Esophagus muscularis mucosa (tissue), 4 donors: ENCODE measurements at regions of chr10 and their contacts with region 1.

Region 1: DNA sequence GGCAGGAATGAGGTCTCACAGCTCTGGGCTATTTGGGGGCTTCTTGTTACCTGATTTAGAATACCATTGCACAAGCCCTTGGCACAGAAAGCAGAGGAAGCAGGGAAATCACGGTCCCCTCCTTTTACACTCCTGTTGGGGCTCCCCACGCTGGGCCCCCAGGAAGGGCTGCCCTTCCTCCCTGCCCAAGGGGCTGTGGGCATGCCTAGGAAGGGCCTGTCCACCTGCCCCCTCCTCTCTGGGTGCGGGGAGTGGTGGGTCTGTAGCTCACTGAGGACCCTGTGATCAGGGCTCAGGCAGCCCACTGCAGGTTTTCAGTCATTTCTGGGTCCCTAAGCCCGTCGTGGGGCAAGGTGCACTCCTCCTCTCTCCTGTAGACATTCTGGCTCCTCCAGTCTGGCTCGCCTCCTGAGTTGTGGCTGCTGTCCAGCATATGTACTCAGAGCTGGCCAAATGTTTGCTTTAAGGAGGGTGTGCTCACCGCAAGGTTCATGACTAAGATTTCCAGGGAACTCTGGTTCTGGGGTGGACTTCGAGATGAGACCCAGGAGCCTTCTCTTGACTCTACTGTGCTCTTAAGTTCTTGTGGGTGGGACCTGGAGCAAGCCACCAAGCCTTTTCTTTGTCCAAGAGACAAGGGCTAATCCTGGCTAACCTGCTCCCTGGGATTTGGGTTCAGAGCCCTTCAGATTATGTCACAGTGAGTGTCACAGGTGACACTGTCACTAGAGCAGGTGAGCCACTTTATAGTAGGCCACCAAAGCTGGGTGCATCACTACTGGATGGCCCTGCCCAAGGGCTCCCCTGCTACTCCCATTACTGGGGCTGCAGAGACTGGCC is 56.0 kb downstream of the TACR2 start:
- DNase-seq: no peak
- H3K4me3 ChIP-seq: no peak overlapping the region
- H3K27ac ChIP-seq: peak overlapping the region; percentile 78 to 88 (median 82)
- H3K4me1 ChIP-seq: peaks cover 61 to 82% (median 63%) of the 10 kb centered on the region in 4 donors
- H3K27me3 ChIP-seq: no peaks in the 10 kb centered on the region
- CTCF ChIP-seq: no peak
- EP300 ChIP-seq: no peak
- POLR2A ChIP-seq: no peak

Region 2: DNA sequence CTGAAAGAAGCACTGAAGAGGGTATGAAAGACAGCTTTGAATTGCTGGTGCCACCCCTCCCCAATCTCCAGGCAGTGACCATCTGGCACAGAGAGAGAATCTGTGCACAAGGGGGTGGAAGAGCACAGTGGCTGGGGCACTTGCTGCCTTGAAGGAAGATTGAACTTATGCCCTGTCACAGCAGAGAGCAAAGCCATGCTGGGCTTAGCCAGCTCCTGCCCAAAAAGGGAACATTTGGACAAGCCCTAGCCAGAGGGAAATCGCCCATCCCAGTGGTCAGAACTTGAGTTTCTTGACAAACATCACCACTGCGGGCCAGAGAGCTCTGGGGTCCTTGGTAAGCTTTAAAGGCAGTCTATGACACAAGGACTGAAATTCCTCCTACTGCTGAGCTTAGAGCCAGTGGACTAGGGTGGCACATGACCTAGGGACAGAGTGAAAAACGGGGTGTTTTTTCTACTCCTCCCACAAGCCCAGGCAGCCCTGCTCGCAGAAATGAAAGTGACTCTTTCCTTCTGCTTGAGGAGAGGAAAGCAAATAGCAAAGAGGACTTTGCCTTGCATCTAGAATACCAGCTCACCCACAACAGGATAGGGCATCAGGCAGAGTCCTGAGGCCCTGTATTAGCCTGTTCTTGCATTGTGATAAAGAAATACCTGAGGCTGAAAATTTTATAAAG is 1921.9 kb before region 1 on chr10:
- intact Hi-C with region 1: no loop called
- DNase-seq: no peak
- H3K4me3 ChIP-seq: no peak overlapping the region
- H3K27ac ChIP-seq: no peak overlapping the region
- H3K4me1 ChIP-seq: peaks cover 0 to 6% (median 0%) of the 10 kb centered on the region in 4 donors
- H3K27me3 ChIP-seq: no peaks in the 10 kb centered on the region
- CTCF ChIP-seq: no peak
- EP300 ChIP-seq: no peak
- POLR2A ChIP-seq: no peak

Region 3: GRCh38 chr10:69327463-69328379 is 33.0 kb before region 1 on chr10:
- intact Hi-C with region 1: loop called (anchors 5 kb)
- DNase-seq: peak; percentile 93
- H3K4me3 ChIP-seq: peak overlapping the region; percentile 29 to 45 (median 40)
- H3K27ac ChIP-seq: peak overlapping the region; percentile 81 to 88 (median 86)
- H3K4me1 ChIP-seq: peaks cover 84 to 99% (median 93%) of the 10 kb centered on the region in 4 donors
- H3K27me3 ChIP-seq: no peaks in the 10 kb centered on the region
- CTCF ChIP-seq: no peak
- EP300 ChIP-seq: no peak
- POLR2A ChIP-seq: no peak

Region 4: GRCh38 chr10:69413221-69413865 is 52.6 kb after region 1 on chr10:
- intact Hi-C with region 1: no loop called
- DNase-seq: peak; percentile 95
- H3K4me3 ChIP-seq: peak overlapping the region; percentile 43 to 58 (median 48)
- H3K27ac ChIP-seq: peak overlapping the region; percentile 95 to 98 (median 97)
- H3K4me1 ChIP-seq: peaks cover 14 to 76% (median 67%) of the 10 kb centered on the region in 4 donors
- H3K27me3 ChIP-seq: no peaks in the 10 kb centered on the region
- CTCF ChIP-seq: peak; percentile 71 to 88 (median 82)
- EP300 ChIP-seq: no peak
- POLR2A ChIP-seq: no peak